CD4-positive, alpha-beta memory T cell (primary cell): ENCODE measurements at regions of chr12 and their contacts with region 1.

Region 1: DNA sequence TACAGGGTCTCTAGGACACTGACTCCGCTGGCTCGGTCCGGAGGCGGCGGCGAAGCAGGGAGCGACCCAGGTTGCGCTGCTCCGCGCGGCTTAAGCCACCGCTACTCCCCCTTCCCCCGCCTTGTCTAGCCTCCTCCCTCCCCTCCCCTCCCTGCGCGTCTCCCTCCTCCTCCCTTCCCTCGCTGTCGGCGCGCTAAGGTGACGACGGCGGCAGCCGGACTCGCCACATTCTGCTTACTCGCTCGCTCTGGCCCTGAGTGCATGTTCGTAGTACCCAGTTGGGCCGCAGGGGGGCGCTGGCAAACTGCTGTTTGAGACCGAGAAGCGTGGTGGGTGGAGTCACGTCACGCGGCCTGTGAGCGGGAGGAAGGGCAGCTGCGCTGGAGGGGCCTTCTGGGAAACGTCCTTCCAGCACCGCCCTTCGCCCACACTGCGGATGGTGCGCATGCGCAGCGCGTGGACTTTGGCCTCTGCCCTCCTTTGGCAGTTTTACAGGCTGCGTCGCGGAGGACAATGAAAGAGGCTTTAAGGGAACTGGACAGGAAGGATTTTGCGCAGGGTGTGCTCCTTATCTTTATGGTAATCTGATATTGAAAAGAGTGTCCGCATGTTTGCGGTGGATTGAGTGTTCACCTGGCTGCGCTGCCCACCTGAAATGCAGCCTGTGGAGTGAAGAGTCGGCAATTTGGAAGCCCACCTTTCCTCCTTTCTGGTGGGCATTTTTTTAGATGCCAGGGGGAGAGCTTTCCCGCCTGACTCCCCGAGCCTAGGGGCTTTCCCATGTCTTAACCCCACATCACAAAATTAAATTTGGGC is at the start of gene SCAF11:
- DNase-seq: peak; percentile 100
- H3K4me3 ChIP-seq: peak within 1 kb of the TSS; percentile 93 to 94
- H3K4me3 Mint-ChIP-seq: peak within 1 kb of the TSS; percentile 89 to 99 (median 96)
- H3K27ac ChIP-seq: peak within 1 kb of the TSS; percentile 99
- H3K27ac Mint-ChIP-seq: peak within 1 kb of the TSS; percentile 96 to 100 (median 100)
- H3K4me1 ChIP-seq: peaks cover 37% of the 10 kb centered on the region
- H3K4me1 Mint-ChIP-seq: peaks cover 36 to 59% (median 41%) of the 10 kb centered on the region in 4 donors
- H3K27me3 ChIP-seq: no peaks in the 10 kb centered on the region
- H3K27me3 Mint-ChIP-seq: peaks cover 0 to 4% of the 10 kb centered on the region in 2 donors
- total RNA-seq, gene SCAF11: 212 to 236 TPM

Region 2: GRCh38 chr12:45728630-45729232 is 261.9 kb before region 1 on chr12:
- CTCF ChIA-PET with region 1: interaction called, 11 read pairs
- POLR2A ChIA-PET with region 1: interaction called, 89 read pairs
- intact Hi-C with region 1: loop called (anchors 1 kb)
- DNase-seq: peak; percentile 97 to 98 (median 98)
- H3K4me3 ChIP-seq: peak overlapping the region; percentile 78 to 89
- H3K4me3 Mint-ChIP-seq: peak overlapping the region; percentile 92 to 100 (median 100)
- H3K27ac ChIP-seq: peak overlapping the region; percentile 98
- H3K27ac Mint-ChIP-seq: peak overlapping the region; percentile 87 to 99 (median 99)
- H3K4me1 ChIP-seq: peaks cover 41% of the 10 kb centered on the region
- H3K4me1 Mint-ChIP-seq: peaks cover 18 to 56% (median 24%) of the 10 kb centered on the region in 4 donors
- H3K27me3 ChIP-seq: no peaks in the 10 kb centered on the region
- H3K27me3 Mint-ChIP-seq: no peaks in the 10 kb centered on the region

Region 3: DNA sequence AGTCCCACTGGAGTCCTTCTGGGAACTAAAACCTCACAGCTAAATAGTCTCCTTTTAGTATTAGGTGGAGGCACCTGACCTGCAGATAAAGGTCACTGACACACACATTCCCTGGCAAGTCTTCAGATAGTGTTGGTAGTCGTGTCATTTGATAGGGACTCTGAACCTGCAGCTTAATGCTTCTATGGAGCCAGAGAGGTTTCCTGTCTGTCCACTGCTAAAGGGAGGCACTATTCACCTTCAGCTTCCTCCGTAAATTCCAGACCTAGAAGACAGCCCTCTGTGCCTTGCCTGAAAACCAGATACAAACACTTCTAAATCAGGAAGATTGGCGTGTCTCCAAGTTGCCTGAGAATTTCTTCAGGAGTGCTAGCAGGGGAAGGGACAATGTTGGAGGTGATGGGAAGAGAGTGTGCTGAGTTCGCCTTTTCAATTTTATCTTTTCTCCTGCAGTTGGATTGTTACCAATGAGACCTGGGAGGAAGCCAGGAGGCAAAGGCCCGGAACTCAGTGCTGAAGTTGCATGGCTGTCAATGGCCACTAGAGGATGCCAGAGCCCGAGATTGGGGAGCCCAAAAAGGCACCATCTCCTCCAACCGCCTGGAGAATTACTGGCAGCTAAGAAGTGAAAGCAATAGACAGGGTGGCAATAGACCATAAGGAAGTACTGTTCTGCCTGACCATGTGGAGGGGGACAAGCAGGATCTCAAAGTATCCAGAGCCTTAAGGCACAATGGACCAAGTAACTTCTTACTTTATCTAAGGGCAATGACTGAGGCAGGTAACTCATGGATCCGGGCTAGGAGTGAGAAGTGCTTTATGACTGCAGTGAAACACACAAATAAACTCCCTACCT is 81.3 kb after region 1 on chr12:
- CTCF ChIA-PET with region 1: interaction called, 6 read pairs
- POLR2A ChIA-PET with region 1: no interaction called
- intact Hi-C with region 1: loop called (anchors 1 kb)
- DNase-seq: peak; percentile 42 to 68 (median 48)
- H3K4me3 ChIP-seq: no peak overlapping the region
- H3K4me3 Mint-ChIP-seq: no peak overlapping the region
- H3K27ac ChIP-seq: no peak overlapping the region
- H3K27ac Mint-ChIP-seq: peak overlapping the region in 2 of 7 donors; percentile 2 to 15
- H3K4me1 ChIP-seq: no peaks in the 10 kb centered on the region
- H3K4me1 Mint-ChIP-seq: peaks cover 0 to 5% (median 2%) of the 10 kb centered on the region in 4 donors
- H3K27me3 ChIP-seq: no peaks in the 10 kb centered on the region
- H3K27me3 Mint-ChIP-seq: peaks cover 3 to 5% of the 10 kb centered on the region in 2 donors

Region 4: DNA sequence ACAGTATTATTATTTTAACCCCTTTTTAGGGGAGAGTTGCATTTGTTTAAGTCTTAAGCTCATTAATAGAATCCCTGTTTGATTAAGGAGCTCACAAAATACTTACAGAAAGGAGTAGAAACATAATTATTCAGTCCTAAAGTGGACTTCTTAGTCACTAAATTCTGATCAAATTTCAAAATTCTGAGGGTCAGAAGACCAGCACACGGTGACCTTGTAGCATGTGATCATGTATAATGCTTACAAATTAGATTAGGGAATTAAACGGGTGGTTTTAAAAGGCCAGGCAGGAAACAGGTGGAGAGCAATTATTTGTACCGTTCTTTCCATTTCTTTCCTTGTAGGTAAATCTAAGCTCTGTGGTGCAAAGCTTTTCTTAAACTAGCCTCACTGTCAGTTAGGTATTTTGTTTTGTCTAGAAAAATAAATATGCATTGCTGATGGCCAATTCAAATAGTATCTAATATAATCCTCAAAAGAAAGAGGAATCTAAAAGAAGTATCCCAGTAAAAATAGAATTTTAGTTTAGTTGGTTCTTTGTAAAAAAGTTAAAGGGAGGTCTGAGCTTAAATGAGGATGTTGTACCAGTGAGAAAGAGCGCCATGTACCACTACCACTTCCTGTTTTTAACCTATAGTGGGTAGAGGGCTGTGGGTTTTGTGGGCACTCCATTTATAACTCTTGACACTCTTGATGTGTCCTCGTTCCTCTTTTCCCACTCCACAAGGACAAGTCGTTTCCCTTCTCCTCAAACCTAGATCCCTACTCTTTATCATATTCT is 227.1 kb after region 1 on chr12:
- CTCF ChIA-PET with region 1: interaction called, 3 read pairs
- POLR2A ChIA-PET with region 1: interaction called, 24 read pairs
- intact Hi-C with region 1: loop called (anchors 1 kb)
- DNase-seq: peak; percentile 76 to 85 (median 81)
- H3K4me3 ChIP-seq: peak overlapping the region; percentile 42 to 56
- H3K4me3 Mint-ChIP-seq: peak overlapping the region; percentile 78 to 90 (median 84)
- H3K27ac ChIP-seq: peak overlapping the region; percentile 87
- H3K27ac Mint-ChIP-seq: peak overlapping the region; percentile 96 to 100 (median 98)
- H3K4me1 ChIP-seq: peaks cover 99% of the 10 kb centered on the region
- H3K4me1 Mint-ChIP-seq: peaks cover 88 to 98% (median 93%) of the 10 kb centered on the region in 4 donors
- H3K27me3 ChIP-seq: no peaks in the 10 kb centered on the region
- H3K27me3 Mint-ChIP-seq: no peaks in the 10 kb centered on the region

Region 5: DNA sequence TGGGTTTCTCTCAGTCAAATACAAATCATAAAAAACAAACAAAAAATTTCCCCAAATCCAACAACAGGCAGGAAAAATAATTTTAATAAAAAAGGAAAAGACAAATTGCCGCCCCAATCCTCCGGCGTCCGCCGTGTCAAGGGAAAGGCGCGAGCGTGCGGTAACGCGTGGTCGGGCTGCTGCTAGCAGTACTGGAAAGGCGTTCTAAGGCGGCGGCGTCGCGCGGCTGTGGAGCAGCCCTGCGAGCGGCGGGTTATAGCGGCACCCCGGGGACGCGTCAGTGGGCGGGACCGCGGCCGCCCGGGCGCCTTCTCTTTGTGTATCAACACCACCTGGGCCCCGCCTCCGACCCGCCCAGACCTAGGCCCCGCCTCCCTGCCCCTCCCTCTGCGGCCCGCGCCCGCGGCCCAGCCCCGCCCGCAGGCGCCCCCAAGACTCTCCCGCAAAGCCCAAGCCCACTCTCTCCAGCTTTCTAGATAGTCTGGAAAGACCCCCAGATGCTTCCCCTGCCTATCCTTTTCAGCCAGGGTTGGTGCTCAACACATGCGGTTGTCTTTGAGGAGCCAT is 382.0 kb after region 1 on chr12 and contains the start of gene SLC38A2:
- CTCF ChIA-PET with region 1: no interaction called
- POLR2A ChIA-PET with region 1: interaction called, 23 read pairs
- intact Hi-C with region 1: loop called (anchors 1 kb)
- DNase-seq: peak; percentile 94 to 96 (median 95)
- H3K4me3 ChIP-seq: peak within 1 kb of the TSS; percentile 76 to 93
- H3K4me3 Mint-ChIP-seq: peak within 1 kb of the TSS; percentile 94 to 99 (median 96)
- H3K27ac ChIP-seq: peak within 1 kb of the TSS; percentile 88
- H3K27ac Mint-ChIP-seq: peak within 1 kb of the TSS; percentile 93 to 99 (median 99)
- H3K4me1 ChIP-seq: peaks cover 54% of the 10 kb centered on the region
- H3K4me1 Mint-ChIP-seq: peaks cover 39 to 68% (median 44%) of the 10 kb centered on the region in 4 donors
- H3K27me3 ChIP-seq: no peaks in the 10 kb centered on the region
- H3K27me3 Mint-ChIP-seq: peaks cover 0 to 6% of the 10 kb centered on the region in 2 donors
- total RNA-seq, gene SLC38A2: 200 to 208 TPM